ENCODE measurements at regions of chr4 and their contacts with region 1.

Region 1: GRCh38 chr4:38034986-38035882 is 75.0 kb downstream of the PTTG2 start:
- DNase-seq: no peak
- H3K4me3 ChIP-seq: no peak overlapping the region
- H3K27ac ChIP-seq: peak overlapping the region; percentile 42 to 52
- H3K4me1 ChIP-seq: peaks cover 0 to 6% (median 3%) of the 10 kb centered on the region in 4 donors
- H3K27me3 ChIP-seq: no peaks in the 10 kb centered on the region
- CTCF ChIP-seq: peak; percentile 69 to 85

Region 2: DNA sequence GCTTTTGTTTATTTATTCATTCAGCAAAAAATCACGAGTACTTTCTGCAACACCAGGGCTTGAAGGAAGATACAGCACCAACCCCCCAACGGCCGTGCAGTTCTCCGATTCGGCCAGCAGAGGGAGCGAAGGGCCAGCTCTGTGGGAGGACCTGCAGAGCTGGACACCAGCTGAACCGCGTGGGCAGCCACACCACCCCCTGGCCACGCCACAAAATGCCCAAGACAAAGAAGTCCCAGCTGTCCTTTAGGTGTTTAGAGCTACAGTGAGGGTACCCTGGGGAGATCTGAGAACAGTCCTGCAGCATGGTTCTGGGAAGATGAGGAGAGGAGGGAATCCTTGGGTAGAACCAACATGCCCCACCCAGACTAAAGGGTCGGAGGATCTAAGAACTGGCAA is 432.2 kb before region 1 on chr4:
- intact Hi-C with region 1: loop called (anchors 5 kb)
- DNase-seq: peak; percentile 82 to 89
- H3K4me3 ChIP-seq: no peak overlapping the region
- H3K27ac ChIP-seq: no peak overlapping the region
- H3K4me1 ChIP-seq: no peaks in the 10 kb centered on the region
- H3K27me3 ChIP-seq: no peaks in the 10 kb centered on the region
- CTCF ChIP-seq: peak; percentile 95 to 99

Region 3: DNA sequence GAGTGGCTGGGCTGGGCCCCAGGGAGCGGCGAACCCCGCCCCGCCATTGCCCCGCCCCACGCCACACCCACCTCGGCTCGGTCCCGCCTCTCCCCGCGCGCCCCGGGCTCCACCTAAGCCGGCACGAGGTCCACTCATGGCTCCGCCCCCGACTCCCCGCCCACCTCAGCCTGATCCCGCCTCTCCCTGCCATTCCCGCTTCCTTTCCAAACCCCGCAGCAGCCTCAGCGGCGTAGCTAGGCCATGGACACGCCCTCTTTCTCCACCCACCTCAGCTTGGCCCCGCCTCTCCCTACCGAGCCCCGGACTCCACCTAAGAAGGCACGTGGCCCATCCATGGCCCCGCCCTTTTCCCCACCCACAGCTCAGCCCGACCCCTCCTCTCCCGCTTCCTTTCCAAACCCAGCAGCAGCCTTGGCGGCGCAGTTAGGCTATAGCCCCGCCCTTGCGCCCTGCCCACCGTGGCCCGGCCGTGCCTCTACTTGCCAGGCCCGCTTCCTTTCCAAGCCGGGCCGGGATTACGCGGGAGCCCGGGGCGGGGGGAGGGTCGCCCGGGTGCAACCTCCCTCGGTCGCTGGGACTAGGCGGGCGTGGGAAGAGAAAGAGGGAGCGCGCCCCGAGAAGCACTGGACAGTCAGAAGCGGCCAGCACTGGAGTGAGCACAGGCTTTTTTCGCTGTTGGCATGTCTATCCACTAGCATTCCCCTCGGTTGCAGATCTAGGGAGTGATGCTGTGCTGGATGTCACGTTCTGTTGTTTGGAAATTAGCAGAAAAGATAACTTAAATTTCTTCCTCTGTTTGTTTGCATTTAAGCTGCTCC is 348.7 kb before region 1 on chr4 and contains the start of gene RELL1:
- intact Hi-C with region 1: loop called (anchors 10 kb)
- DNase-seq: peak; percentile 99 to 100
- H3K4me3 ChIP-seq: peak within 1 kb of the TSS; percentile 68 to 91
- H3K27ac ChIP-seq: peak within 1 kb of the TSS; percentile 85 to 98
- H3K4me1 ChIP-seq: peaks cover 0 to 24% (median 12%) of the 10 kb centered on the region in 4 donors
- H3K27me3 ChIP-seq: no peaks in the 10 kb centered on the region
- CTCF ChIP-seq: no peak

Region 4: GRCh38 chr4:37802068-37802666 is 233.1 kb before region 1 on chr4:
- intact Hi-C with region 1: loop called (anchors 5 kb)
- DNase-seq: peak; percentile 23 to 75
- H3K4me3 ChIP-seq: no peak overlapping the region
- H3K27ac ChIP-seq: no peak overlapping the region
- H3K4me1 ChIP-seq: no peaks in the 10 kb centered on the region
- H3K27me3 ChIP-seq: no peaks in the 10 kb centered on the region
- CTCF ChIP-seq: peak; percentile 48 to 56

Measured in tibial artery (tissue), 4 donors.